ENCODE measurements at regions of chr3 and their contacts with region 1.

Region 1: DNA sequence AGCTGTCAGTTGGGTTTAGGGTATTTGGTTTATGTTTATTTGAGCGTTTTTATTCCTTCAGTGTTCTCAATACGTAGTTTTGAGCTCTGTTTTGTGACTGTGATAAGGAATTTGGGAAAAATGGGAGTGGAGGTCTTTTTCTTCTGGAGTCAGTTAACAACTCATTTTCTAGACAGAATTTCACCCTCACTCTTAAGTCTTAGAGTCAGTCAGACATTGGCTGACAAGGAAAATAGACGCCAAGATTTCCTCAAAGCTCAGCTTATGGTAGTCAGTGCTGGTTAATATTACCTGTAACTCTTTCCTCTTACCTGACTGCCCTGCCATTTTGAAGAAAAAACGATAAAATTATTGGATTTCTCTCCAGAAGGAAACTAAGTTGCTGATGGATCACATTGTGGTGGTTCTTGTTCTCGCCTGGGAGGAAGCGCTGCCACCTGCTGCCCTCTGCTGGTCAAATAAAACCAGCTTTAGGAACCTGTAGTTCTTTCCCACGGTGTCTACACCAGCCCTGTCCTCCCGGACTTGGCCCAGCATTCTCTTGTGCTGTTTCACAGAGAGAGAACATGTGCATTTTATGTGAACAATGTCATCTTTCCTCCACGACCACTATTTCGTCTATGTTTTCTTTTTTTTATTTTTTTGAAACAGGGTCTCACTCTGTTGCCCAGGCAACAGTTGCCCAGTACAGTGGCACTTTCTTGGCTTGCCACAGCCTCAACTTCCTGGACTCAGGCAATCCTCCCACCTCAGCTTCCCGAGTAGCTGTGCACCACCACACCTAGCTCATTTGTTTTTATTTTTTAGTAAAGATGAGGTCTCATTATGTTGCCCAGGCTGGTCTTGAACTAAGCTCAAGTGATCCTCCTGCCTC is 41.4 kb upstream of the UMPS start:
- DNase-seq: peak; percentile 89
- H3K4me3 Mint-ChIP-seq: no peak overlapping the region
- H3K27ac Mint-ChIP-seq: no peak overlapping the region
- H3K4me1 Mint-ChIP-seq: peaks cover 9% of the 10 kb centered on the region
- H3K27me3 Mint-ChIP-seq: peaks cover 13% of the 10 kb centered on the region

Region 2: DNA sequence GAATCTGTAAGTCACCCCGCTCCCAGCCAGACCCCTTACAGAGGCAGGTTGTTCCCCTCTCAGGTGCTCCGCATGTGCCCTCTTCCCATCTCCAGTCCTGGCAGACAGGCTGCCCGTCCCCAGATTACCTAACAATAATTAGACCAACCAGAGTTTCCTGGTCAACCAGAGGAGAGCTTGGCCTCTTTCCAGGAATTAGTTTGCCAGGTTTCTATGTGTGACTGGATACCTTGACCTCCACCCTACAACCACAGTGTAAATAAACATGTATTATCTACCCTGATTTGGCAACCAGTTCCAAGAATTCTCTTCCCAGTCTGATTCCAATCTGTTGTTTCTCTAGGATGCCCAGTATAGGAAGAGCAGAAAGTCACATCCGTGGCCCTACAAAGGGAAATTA is 136.6 kb before region 1 on chr3:
- CTCF ChIA-PET with region 1: interaction called, 11 read pairs
- intact Hi-C with region 1: no loop called
- DNase-seq: no peak
- H3K4me3 Mint-ChIP-seq: no peak overlapping the region
- H3K27ac Mint-ChIP-seq: no peak overlapping the region
- H3K4me1 Mint-ChIP-seq: peaks cover 3% of the 10 kb centered on the region
- H3K27me3 Mint-ChIP-seq: peaks cover 21% of the 10 kb centered on the region

Region 3: DNA sequence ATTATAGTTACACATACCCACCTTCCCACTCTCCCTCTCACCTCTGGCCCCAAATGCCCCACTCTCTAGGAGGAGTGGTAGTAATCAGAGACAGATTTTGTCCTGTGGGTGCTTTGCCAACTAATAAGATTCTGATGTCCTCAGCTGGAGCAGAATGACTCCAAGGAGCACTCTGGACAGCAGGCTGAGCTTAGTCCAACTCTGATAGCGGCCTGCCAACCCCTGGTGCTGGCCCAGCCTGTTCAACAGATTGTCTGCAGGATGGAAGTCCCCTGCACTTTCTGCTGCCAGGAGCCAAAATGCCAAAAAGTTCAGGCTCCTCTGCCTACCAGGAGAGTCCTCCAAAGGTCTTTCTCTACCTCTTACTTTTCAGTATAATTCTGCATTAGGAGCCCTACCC is 119.1 kb before region 1 on chr3:
- CTCF ChIA-PET with region 1: interaction called, 238 read pairs
- intact Hi-C with region 1: loop called (anchors 1 kb)
- DNase-seq: no peak
- H3K4me3 Mint-ChIP-seq: no peak overlapping the region
- H3K27ac Mint-ChIP-seq: no peak overlapping the region
- H3K4me1 Mint-ChIP-seq: no peaks in the 10 kb centered on the region
- H3K27me3 Mint-ChIP-seq: no peaks in the 10 kb centered on the region

Region 4: GRCh38 chr3:124620600-124621063 is 68.2 kb before region 1 on chr3:
- CTCF ChIA-PET with region 1: interaction called, 9 read pairs
- intact Hi-C with region 1: loop called (anchors 1 kb)
- DNase-seq: peak; percentile 61
- H3K4me3 Mint-ChIP-seq: no peak overlapping the region
- H3K27ac Mint-ChIP-seq: peak overlapping the region; percentile 7
- H3K4me1 Mint-ChIP-seq: peaks cover 43% of the 10 kb centered on the region
- H3K27me3 Mint-ChIP-seq: no peaks in the 10 kb centered on the region

Region 5: GRCh38 chr3:124660599-124660998 is 28.2 kb before region 1 on chr3:
- CTCF ChIA-PET with region 1: interaction called, 12 read pairs
- intact Hi-C with region 1: no loop called
- DNase-seq: no peak
- H3K4me3 Mint-ChIP-seq: no peak overlapping the region
- H3K27ac Mint-ChIP-seq: peak overlapping the region; percentile 57
- H3K4me1 Mint-ChIP-seq: peaks cover 24% of the 10 kb centered on the region
- H3K27me3 Mint-ChIP-seq: peaks cover 2% of the 10 kb centered on the region

Region 6: GRCh38 chr3:124818398-124819091 is 129.7 kb after region 1 on chr3:
- CTCF ChIA-PET with region 1: no interaction called
- intact Hi-C with region 1: no loop called
- DNase-seq: no peak
- H3K4me3 Mint-ChIP-seq: no peak overlapping the region
- H3K27ac Mint-ChIP-seq: no peak overlapping the region
- H3K4me1 Mint-ChIP-seq: no peaks in the 10 kb centered on the region
- H3K27me3 Mint-ChIP-seq: peaks cover 7% of the 10 kb centered on the region